PC-3 (cell line): ENCODE measurements at regions of chr1 and their contacts with region 1.

Region 1: DNA sequence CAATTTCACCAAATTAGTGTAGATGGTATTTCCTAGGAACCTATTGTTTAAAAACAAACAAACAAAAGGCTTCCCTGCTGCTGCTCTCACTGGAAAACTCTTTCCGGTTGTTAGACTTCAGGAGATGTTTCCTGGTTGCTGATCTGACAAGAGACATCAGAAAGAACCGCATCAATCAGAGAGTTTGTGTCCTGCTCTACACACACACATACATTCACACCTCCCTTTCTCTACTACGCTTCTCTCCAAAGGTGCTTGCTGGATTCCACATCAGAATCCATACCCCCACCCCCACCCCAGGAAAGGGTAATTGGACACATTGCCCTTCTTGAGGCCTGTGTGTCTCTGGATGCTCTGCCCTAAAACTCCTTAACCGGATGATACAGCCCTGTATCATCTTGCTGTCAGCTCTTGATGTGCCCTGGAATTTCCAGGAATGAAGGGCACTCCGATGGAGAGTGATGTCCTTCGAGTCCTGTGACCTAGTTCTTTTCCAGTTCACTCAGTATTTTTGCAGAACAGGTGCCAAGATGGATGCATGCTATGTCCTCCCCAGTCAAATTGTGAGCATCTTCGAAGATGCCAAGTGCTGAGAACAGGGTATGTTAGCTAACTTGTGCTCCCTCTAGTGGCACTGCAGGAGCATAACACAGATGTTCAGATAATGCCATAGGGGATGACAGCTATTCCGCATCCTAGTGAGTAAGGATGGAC is 113.7 kb upstream of the SLC35F3 start:
- DNase-seq: peak; percentile 87
- ATAC-seq: peak; percentile 87
- H3K4me3 ChIP-seq: no peak overlapping the region
- H3K27ac ChIP-seq: no peak overlapping the region
- H3K4me1 ChIP-seq: peaks cover 12% of the 10 kb centered on the region
- H3K27me3 ChIP-seq: no peaks in the 10 kb centered on the region
- CTCF ChIP-seq: peak; percentile 98

Region 2: GRCh38 chr1:233394860-233395717 is 395.7 kb before region 1 on chr1:
- CTCF ChIA-PET with region 1: no interaction called
- POLR2A ChIA-PET with region 1: no interaction called
- intact Hi-C with region 1: loop called (anchors 1 kb)
- DNase-seq: peak; percentile 90
- ATAC-seq: peak; percentile 97
- H3K4me3 ChIP-seq: no peak overlapping the region
- H3K27ac ChIP-seq: no peak overlapping the region
- H3K4me1 ChIP-seq: 0 out of 2 replicates have a peak, but pooled peaks cover 3% of the 10 kb centered on the region
- H3K27me3 ChIP-seq: no peaks in the 10 kb centered on the region
- CTCF ChIP-seq: peak; percentile 98

Region 3: DNA sequence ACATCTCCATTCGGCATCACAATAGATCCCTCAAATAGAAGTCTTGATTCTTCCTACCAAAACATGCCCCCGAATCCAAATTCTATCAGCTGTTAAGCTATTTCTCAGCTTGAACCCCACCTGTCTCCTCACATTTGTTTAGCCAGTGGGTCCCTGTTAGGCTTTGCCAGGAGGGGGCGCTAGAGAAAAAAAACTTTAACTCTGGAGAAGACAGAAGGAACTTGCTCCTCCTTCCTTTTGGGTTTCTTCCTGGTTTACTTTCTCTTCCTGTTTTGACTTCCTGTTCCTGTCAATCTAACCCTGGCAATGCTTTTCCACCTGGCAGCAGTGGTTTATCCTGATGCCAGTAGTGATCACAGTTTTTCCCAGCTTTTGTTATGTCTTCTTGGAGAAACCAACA is 272.5 kb before region 1 on chr1:
- CTCF ChIA-PET with region 1: interaction called, 3 read pairs
- POLR2A ChIA-PET with region 1: no interaction called
- intact Hi-C with region 1: loop called (anchors 1 kb)
- DNase-seq: peak; percentile 85
- ATAC-seq: no peak
- H3K4me3 ChIP-seq: no peak overlapping the region
- H3K27ac ChIP-seq: no peak overlapping the region
- H3K4me1 ChIP-seq: peaks cover 17% of the 10 kb centered on the region
- H3K27me3 ChIP-seq: no peaks in the 10 kb centered on the region
- CTCF ChIP-seq: peak; percentile 98

Region 4: GRCh38 chr1:233656032-233656620 is 134.7 kb before region 1 on chr1:
- CTCF ChIA-PET with region 1: no interaction called
- POLR2A ChIA-PET with region 1: no interaction called
- intact Hi-C with region 1: no loop called
- DNase-seq: peak; percentile 52
- ATAC-seq: peak; percentile 14; the same call in 1 of the 2 replicates
- H3K4me3 ChIP-seq: peak overlapping the region; percentile 42
- H3K27ac ChIP-seq: peak overlapping the region; percentile 93
- H3K4me1 ChIP-seq: peaks cover 49% of the 10 kb centered on the region
- H3K27me3 ChIP-seq: no peaks in the 10 kb centered on the region
- CTCF ChIP-seq: no peak

Region 5: GRCh38 chr1:233707153-233707879 is 83.5 kb before region 1 on chr1:
- CTCF ChIA-PET with region 1: interaction called, 3 read pairs
- POLR2A ChIA-PET with region 1: no interaction called
- intact Hi-C with region 1: loop called (anchors 1 kb)
- DNase-seq: peak; percentile 91
- ATAC-seq: peak; percentile 91
- H3K4me3 ChIP-seq: peak overlapping the region; percentile 17; the same call in 1 of the 2 replicates
- H3K27ac ChIP-seq: peak overlapping the region; percentile 84
- H3K4me1 ChIP-seq: peaks cover 47% of the 10 kb centered on the region
- H3K27me3 ChIP-seq: no peaks in the 10 kb centered on the region
- CTCF ChIP-seq: no peak

Region 6: GRCh38 chr1:233777566-233777965 is 13.3 kb before region 1 on chr1:
- CTCF ChIA-PET with region 1: no interaction called
- POLR2A ChIA-PET with region 1: no interaction called
- intact Hi-C with region 1: no loop called
- DNase-seq: no peak
- ATAC-seq: no peak
- H3K4me3 ChIP-seq: no peak overlapping the region
- H3K27ac ChIP-seq: no peak overlapping the region
- H3K4me1 ChIP-seq: no peaks in the 10 kb centered on the region
- H3K27me3 ChIP-seq: no peaks in the 10 kb centered on the region
- CTCF ChIP-seq: no peak

Region 7: DNA sequence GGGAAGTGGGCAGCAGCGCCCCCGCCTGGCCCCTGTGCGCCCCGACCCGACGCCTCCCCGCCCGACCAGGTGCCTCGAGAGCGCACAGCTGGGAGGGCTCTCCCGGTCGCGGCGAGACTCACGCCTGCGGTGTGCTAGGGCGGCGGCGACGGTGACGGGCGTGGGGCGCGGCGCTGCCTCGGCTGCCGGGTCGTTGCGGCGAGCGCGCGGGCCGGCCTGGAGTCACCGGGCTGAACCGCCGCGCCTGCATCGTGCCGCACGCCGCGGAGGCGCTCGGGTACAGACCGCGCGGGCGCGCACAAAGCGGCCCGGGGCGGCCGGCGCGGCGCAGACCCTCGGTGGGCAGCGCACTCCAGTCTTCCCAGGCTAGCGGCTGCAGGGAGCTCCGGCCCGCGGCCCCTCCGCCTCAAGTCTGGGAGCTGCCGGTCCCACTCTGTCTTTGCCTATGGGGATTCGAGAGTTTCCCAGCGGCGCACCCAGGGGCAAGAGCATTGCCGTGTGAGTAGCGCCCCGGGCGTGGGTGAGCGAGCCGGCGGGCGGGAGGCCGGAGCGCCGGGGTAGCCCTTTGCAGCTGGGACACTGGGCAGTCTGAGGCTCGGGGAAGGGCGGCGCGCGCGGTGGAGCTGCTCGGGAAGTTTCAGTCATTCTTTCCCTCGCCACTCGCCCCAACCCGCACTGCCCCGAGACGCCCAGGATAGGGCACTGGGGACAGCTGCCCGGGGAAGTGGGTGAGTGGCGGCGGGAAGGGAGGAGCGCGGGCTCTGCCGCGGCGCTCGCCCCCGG is 114.0 kb after region 1 on chr1 and contains the start of gene SLC35F3:
- CTCF ChIA-PET with region 1: interaction called, 4 read pairs
- POLR2A ChIA-PET with region 1: no interaction called
- intact Hi-C with region 1: loop called (anchors 1 kb)
- DNase-seq: peak; percentile 93
- ATAC-seq: peak; percentile 78
- H3K4me3 ChIP-seq: peak within 1 kb of the TSS; percentile 72
- H3K27ac ChIP-seq: peak within 1 kb of the TSS; percentile 85
- H3K4me1 ChIP-seq: peaks cover 39% of the 10 kb centered on the region
- H3K27me3 ChIP-seq: no peaks in the 10 kb centered on the region
- CTCF ChIP-seq: peak; percentile 72
- total RNA-seq, gene SLC35F3: 17.7 and 19.3 TPM in 2 replicates